Activated T-helper 1 cell treated with anti-CD3 and anti-CD28 coated beads, Interleukin-12 subunit alpha, Interleukin-12 subunit beta, Interleukin-2, Interleukin-4 antibody, amounts not matched to agents 30 ng/mL and 10 ng/mL and 1 ng/mL, durations not matched to agents 14 hours and 24 hours and 36 hours (primary cell): ENCODE measurements at regions of chr9 and their contacts with region 1.

Region 1: GRCh38 chr9:3732077-3733038 is 206.6 kb upstream of the RFX3 start:
- DNase-seq: peak; percentile 41
- H3K4me3 Mint-ChIP-seq: no peak overlapping the region
- H3K27ac Mint-ChIP-seq: peak overlapping the region; percentile 40
- H3K4me1 Mint-ChIP-seq: peaks cover 24% of the 10 kb centered on the region
- H3K27me3 Mint-ChIP-seq: no peaks in the 10 kb centered on the region

Region 2: GRCh38 chr9:3467593-3468219 is 264.7 kb before region 1 on chr9:
- intact Hi-C with region 1: loop called (anchors 1 kb)
- DNase-seq: peak; percentile 40
- H3K4me3 Mint-ChIP-seq: no peak overlapping the region
- H3K27ac Mint-ChIP-seq: no peak overlapping the region
- H3K4me1 Mint-ChIP-seq: peaks cover 6% of the 10 kb centered on the region
- H3K27me3 Mint-ChIP-seq: no peaks in the 10 kb centered on the region

Region 3: GRCh38 chr9:3674596-3674995 is 57.8 kb before region 1 on chr9:
- intact Hi-C with region 1: no loop called
- DNase-seq: no peak
- H3K4me3 Mint-ChIP-seq: no peak overlapping the region
- H3K27ac Mint-ChIP-seq: no peak overlapping the region
- H3K4me1 Mint-ChIP-seq: no peaks in the 10 kb centered on the region
- H3K27me3 Mint-ChIP-seq: no peaks in the 10 kb centered on the region

Region 4: DNA sequence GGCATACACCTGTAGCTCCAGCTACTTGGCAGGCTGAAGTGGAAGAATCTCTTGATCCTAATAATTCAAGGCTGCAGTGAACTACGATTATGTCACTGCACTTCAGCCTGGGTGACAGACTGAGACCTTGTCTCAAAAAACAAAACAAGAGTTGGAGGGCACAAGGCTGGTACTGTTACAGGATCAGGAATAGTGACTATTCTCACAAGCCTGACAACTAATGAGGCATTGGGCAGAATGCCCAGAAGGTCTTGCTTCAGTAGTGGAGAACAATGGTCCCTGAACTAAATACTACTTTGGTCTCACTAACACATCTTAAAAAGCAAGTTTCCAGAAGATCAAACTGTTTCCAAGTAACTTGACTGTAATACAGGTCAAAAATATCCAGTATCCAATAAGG is 23.6 kb before region 1 on chr9:
- intact Hi-C with region 1: no loop called
- DNase-seq: no peak
- H3K4me3 Mint-ChIP-seq: no peak overlapping the region
- H3K27ac Mint-ChIP-seq: no peak overlapping the region
- H3K4me1 Mint-ChIP-seq: no peaks in the 10 kb centered on the region
- H3K27me3 Mint-ChIP-seq: peaks cover 3% of the 10 kb centered on the region

Region 5: DNA sequence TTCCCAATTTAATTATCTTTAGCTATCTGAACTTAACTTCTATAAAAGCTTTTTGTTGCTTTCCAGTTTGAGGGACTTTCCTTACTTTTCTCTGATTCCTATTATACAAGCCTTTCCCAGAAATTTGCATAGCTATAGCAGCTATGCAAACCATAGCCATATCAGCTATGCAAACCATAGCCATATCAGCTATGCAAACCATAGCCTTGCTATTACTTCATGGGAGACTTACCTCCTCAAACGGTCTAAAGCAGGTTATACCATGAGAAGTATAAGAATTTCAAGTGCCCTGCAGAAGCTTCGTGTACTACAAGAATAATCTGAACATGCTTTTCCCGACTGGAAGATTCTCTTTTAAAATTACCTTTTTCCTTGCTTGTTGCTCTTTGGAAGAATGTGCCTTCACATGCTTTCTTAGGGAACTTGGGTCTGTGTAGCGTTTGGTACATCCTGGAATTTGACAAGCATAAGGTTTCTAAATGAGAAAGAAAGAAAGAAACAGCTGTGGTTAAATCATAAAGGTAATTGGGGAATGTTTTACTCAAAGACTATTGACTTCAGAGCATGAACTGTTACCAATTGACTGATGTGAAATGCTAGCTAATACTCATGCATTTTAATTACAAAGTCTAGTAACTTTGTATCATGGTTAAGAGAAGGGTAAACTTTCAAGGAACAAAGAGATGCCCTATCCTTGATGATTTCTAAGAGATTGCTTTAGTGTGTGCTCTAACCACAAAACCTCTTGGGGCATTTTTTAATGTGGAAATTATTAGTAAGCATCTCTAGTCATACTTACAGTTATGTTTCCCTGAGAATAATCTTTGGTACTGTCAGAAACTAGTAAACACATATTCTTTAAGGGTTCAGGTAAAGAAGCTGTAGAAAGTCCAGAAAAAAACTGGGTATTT is 199.9 kb after region 1 on chr9:
- intact Hi-C with region 1: loop called (anchors 10 kb)
- DNase-seq: no peak
- H3K4me3 Mint-ChIP-seq: no peak overlapping the region
- H3K27ac Mint-ChIP-seq: peak overlapping the region; percentile 61
- H3K4me1 Mint-ChIP-seq: peaks cover 16% of the 10 kb centered on the region
- H3K27me3 Mint-ChIP-seq: no peaks in the 10 kb centered on the region

Region 6: GRCh38 chr9:4197548-4197947 is 465.2 kb after region 1 on chr9:
- intact Hi-C with region 1: loop called (anchors 10 kb)
- DNase-seq: no peak
- H3K4me3 Mint-ChIP-seq: no peak overlapping the region
- H3K27ac Mint-ChIP-seq: no peak overlapping the region
- H3K4me1 Mint-ChIP-seq: no peaks in the 10 kb centered on the region
- H3K27me3 Mint-ChIP-seq: no peaks in the 10 kb centered on the region

Region 7: GRCh38 chr9:4297151-4297785 is 564.9 kb after region 1 on chr9:
- intact Hi-C with region 1: loop called (anchors 5 kb)
- DNase-seq: peak; percentile 11
- H3K4me3 Mint-ChIP-seq: peak overlapping the region; percentile 95
- H3K27ac Mint-ChIP-seq: peak overlapping the region; percentile 91
- H3K4me1 Mint-ChIP-seq: peaks cover 45% of the 10 kb centered on the region
- H3K27me3 Mint-ChIP-seq: peaks cover 42% of the 10 kb centered on the region

Region 8: DNA sequence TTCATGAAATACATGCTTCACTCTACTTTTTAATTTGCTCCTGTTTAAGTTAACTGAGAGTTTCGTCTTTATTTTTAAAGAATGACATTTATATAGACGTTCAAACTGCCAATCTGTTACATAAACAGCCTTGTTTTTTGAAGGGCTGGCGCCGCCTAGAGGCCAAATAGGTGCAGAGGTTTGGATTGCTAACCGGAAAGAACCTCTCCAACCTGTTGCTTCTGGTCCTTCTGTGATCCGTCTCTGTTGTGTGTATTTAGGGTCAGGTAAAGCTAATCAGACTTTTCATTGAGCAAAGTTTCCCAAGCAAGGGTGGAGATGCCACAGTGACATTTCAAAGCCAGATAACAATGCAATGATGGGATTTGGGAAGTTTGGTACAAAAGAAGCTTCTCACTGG is 607.0 kb after region 1 on chr9:
- intact Hi-C with region 1: loop called (anchors 1 kb)
- DNase-seq: peak; percentile 69
- H3K4me3 Mint-ChIP-seq: no peak overlapping the region
- H3K27ac Mint-ChIP-seq: peak overlapping the region; percentile 77
- H3K4me1 Mint-ChIP-seq: peaks cover 10% of the 10 kb centered on the region
- H3K27me3 Mint-ChIP-seq: peaks cover 4% of the 10 kb centered on the region

Region 9: DNA sequence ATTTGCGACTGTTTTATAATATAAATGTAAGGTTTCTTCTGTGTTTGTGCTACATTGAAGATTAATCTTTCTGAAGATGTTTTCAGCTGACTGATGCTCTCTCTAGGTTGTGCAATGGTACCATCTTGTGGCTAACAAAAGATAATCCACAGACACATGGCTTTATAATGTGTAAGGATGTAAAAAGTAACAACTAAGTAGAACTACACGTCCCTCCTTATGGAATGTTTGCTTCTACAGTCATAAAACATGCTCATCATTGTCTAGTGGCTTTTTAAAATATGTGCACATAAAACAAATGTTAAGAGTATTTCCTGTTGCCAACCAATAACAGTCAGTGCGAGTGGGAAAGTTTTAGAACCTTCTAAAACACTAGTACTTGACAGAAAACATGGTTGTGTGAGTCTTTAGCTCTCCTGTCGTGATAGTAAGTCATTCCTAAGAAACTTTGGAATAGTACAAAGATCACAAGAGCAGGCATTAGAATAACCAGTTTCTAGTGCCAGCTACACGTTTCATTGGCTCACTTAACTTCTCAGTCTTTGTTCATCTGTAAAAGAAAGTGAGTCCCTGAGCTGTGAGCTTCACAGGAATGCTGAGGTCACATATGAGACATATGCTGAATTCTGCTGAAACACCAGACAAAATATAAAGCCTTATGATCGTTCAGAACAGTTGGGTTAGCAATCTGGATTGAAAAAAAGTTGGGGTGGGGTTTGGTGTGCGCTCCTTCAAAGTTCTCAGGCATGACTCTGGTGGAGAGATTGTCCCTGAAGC is 643.3 kb after region 1 on chr9:
- intact Hi-C with region 1: loop called (anchors 2 kb)
- DNase-seq: no peak
- H3K4me3 Mint-ChIP-seq: no peak overlapping the region
- H3K27ac Mint-ChIP-seq: no peak overlapping the region
- H3K4me1 Mint-ChIP-seq: no peaks in the 10 kb centered on the region
- H3K27me3 Mint-ChIP-seq: peaks cover 7% of the 10 kb centered on the region